ENCODE measurements at regions of chr15 and their contacts with region 1.

Region 1: GRCh38 chr15:25947323-25948314 is 84.5 kb upstream of the ATP10A start:
- DNase-seq: no peak
- H3K4me3 ChIP-seq: no peak overlapping the region
- H3K27ac ChIP-seq: no peak overlapping the region
- H3K4me1 ChIP-seq: no peaks in the 10 kb centered on the region
- H3K27me3 ChIP-seq: no peaks in the 10 kb centered on the region
- CTCF ChIP-seq: peak in 1 of 3 experiments; percentile 22

Region 2: GRCh38 chr15:26260517-26261133 is 313.0 kb after region 1 on chr15:
- intact Hi-C with region 1: loop called (anchors 10 kb)
- DNase-seq: no peak
- H3K4me3 ChIP-seq: no peak overlapping the region
- H3K27ac ChIP-seq: no peak overlapping the region
- H3K4me1 ChIP-seq: no peaks in the 10 kb centered on the region
- H3K27me3 ChIP-seq: no peaks in the 10 kb centered on the region
- CTCF ChIP-seq: peak; percentile 50 to 76 (median 68)

Measured in ascending aorta (tissue), 2 donors.